ENCODE measurements at regions of chr3 and their contacts with region 1.

Region 1: GRCh38 chr3:142279965-142280590 is 54.7 kb upstream of the GK5 start:
- DNase-seq: peak in 1 of 2 donors; percentile 82
- ATAC-seq: peak; percentile 77 to 91 (median 87)
- H3K4me3 ChIP-seq: no peak overlapping the region
- H3K4me3 Mint-ChIP-seq: peak overlapping the region; percentile 56
- H3K27ac ChIP-seq: no peak overlapping the region
- H3K27ac Mint-ChIP-seq: peak overlapping the region; percentile 1 to 39
- H3K4me1 ChIP-seq: peaks cover 38% of the 10 kb centered on the region
- H3K4me1 Mint-ChIP-seq: peaks cover 48 to 49% of the 10 kb centered on the region in 2 donors
- H3K27me3 ChIP-seq: no peaks in the 10 kb centered on the region
- H3K27me3 Mint-ChIP-seq: no peaks in the 10 kb centered on the region
- CTCF ChIP-seq: peak; percentile 75

Region 2: GRCh38 chr3:141498598-141499223 is 781.4 kb before region 1 on chr3:
- intact Hi-C with region 1: loop called (anchors 10 kb)
- DNase-seq: peak; percentile 86 to 97
- ATAC-seq: peak; percentile 76 to 91 (median 90)
- H3K4me3 ChIP-seq: peak overlapping the region; percentile 22
- H3K4me3 Mint-ChIP-seq: peak overlapping the region; percentile 89
- H3K27ac ChIP-seq: peak overlapping the region; percentile 90
- H3K27ac Mint-ChIP-seq: peak overlapping the region in 1 of 2 donors; percentile 92
- H3K4me1 ChIP-seq: peaks cover 23% of the 10 kb centered on the region
- H3K4me1 Mint-ChIP-seq: peaks cover 69% of the 10 kb centered on the region in 2 donors
- H3K27me3 ChIP-seq: no peaks in the 10 kb centered on the region
- H3K27me3 Mint-ChIP-seq: no peaks in the 10 kb centered on the region
- CTCF ChIP-seq: no peak

Region 3: DNA sequence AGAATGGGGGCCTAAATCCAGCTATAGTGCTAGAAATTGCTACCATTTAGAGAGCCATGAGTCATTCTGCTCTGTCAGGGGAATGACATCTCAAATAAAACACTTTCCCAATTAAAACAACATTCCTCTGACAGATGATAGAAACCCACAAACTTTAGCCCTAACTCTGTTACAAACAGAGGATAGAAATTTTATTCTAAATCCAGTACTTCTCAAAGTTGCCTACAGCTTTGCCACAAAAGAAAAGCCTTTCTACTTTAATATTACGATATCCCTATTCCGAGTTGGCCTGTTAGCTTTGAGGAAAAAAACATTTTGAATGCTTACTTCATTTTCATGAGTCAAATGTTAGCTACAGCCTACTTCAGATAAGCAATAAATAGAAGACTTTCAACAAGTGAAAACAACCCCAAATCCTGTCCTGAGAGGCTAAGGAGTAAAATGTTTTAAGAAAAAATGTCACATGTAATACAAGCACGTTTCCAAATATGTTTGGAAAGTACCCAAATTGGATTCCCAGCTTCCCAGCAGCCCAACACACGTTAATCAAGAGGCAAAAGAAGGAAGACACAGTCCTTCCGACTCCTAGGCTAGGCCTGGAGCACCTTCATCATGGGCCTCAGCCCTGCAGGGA is 320.0 kb before region 1 on chr3:
- intact Hi-C with region 1: loop called (anchors 1 kb)
- DNase-seq: no peak
- ATAC-seq: no peak
- H3K4me3 ChIP-seq: no peak overlapping the region
- H3K4me3 Mint-ChIP-seq: no peak overlapping the region
- H3K27ac ChIP-seq: no peak overlapping the region
- H3K27ac Mint-ChIP-seq: no peak overlapping the region
- H3K4me1 ChIP-seq: no peaks in the 10 kb centered on the region
- H3K4me1 Mint-ChIP-seq: peaks cover 9 to 11% of the 10 kb centered on the region in 2 donors
- H3K27me3 ChIP-seq: no peaks in the 10 kb centered on the region
- H3K27me3 Mint-ChIP-seq: no peaks in the 10 kb centered on the region
- CTCF ChIP-seq: no peak

Region 4: GRCh38 chr3:142022381-142022780 is 257.7 kb before region 1 on chr3:
- intact Hi-C with region 1: loop called (anchors 2 kb)
- DNase-seq: peak in 1 of 2 donors; percentile 22
- ATAC-seq: peak; percentile 85 to 90 (median 86)
- H3K4me3 ChIP-seq: no peak overlapping the region
- H3K4me3 Mint-ChIP-seq: peak overlapping the region; percentile 1
- H3K27ac ChIP-seq: no peak overlapping the region
- H3K27ac Mint-ChIP-seq: peak overlapping the region; percentile 72 to 78
- H3K4me1 ChIP-seq: peaks cover 7% of the 10 kb centered on the region
- H3K4me1 Mint-ChIP-seq: peaks cover 35 to 38% of the 10 kb centered on the region in 2 donors
- H3K27me3 ChIP-seq: no peaks in the 10 kb centered on the region
- H3K27me3 Mint-ChIP-seq: no peaks in the 10 kb centered on the region
- CTCF ChIP-seq: peak; percentile 20

Region 5: DNA sequence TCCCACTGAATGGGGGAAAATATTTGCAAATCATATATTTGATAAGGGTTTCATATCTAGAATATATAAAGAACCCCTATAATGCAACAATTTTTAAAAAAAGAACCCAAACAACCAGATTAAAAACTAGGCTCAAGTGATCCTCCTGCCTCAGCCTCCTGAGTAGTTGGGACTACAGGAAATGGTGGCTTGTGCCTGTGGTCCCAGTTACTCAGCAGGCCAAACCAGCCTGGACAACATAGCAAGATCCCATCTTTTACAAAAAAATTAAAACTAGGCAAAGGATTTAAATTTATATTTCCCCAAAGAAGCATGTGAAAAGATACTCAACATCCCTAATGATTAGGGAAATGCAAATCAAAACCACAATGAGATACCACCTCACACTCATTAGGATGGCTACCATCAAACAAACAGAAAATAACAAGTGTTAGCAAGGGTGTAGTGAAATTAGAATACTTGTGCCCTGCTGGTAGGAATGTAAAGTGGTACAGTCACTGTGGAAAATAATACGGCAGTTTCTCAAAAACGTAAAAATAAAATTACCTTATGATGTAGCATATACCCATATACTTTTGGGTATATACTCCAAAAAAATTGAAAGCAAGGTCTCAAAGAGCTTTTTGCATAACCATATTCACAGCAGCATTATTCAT is 150.4 kb before region 1 on chr3:
- intact Hi-C with region 1: loop called (anchors 1 kb)
- DNase-seq: no peak
- ATAC-seq: no peak
- H3K4me3 ChIP-seq: no peak overlapping the region
- H3K4me3 Mint-ChIP-seq: peak overlapping the region; percentile 54
- H3K27ac ChIP-seq: peak overlapping the region; percentile 43
- H3K27ac Mint-ChIP-seq: peak overlapping the region; percentile 71 to 86
- H3K4me1 ChIP-seq: peaks cover 30% of the 10 kb centered on the region
- H3K4me1 Mint-ChIP-seq: peaks cover 46 to 53% of the 10 kb centered on the region in 2 donors
- H3K27me3 ChIP-seq: no peaks in the 10 kb centered on the region
- H3K27me3 Mint-ChIP-seq: no peaks in the 10 kb centered on the region
- CTCF ChIP-seq: no peak

Region 6: GRCh38 chr3:142180761-142181362 is 99.2 kb before region 1 on chr3:
- intact Hi-C with region 1: loop called (anchors 1 kb)
- DNase-seq: peak; percentile 51 to 53
- ATAC-seq: peak; percentile 83 to 97 (median 97)
- H3K4me3 ChIP-seq: no peak overlapping the region
- H3K4me3 Mint-ChIP-seq: peak overlapping the region; percentile 1
- H3K27ac ChIP-seq: no peak overlapping the region
- H3K27ac Mint-ChIP-seq: peak overlapping the region; percentile 79 to 86
- H3K4me1 ChIP-seq: no peaks in the 10 kb centered on the region
- H3K4me1 Mint-ChIP-seq: peaks cover 15 to 18% of the 10 kb centered on the region in 2 donors
- H3K27me3 ChIP-seq: no peaks in the 10 kb centered on the region
- H3K27me3 Mint-ChIP-seq: no peaks in the 10 kb centered on the region
- CTCF ChIP-seq: peak; percentile 77